ENCODE measurements at regions of chr15 and their contacts with region 1.

Region 1: DNA sequence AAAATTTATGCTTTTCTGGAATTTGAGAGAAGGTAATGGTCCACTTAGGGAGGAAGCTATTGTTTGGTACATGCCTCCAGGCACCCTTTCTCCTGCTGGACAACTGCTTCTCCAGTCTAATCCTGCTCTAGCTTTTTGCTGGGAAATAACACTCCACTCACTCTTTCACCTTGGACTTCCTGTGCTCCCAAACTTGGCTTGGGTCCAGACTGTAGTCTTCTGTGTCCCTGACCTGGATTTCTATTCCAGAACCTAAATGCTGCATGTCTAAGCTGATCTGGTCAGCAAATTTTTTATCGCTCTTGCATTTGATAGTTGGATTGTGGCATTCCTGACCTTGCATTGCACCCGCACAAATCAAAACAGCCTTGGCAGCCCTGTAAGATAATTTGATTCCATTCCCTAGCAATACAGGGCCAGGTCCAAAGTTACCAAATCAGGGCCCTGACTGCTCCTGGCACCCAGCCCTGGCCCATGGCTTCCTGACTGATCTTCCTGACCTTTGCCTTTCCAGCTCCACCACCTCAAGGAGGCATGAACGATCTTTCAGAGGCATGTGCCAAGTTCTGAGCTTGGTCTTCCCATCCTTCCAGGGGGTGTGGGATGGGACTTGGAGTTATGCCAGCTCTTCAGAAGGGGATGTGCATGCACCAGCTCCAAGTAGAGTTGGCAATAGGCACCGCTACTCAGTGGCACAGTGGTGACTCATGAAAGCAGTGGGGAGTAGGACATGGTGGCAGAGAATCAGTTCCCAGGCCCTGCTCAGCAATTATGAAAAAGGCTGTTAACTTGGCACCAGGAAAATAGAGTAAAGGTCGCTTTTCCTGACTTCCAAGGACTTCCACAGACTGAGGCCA is 43.9 kb upstream of the GOLGA8J start:
- DNase-seq: no peak
- ATAC-seq: no peak
- H3K4me3 ChIP-seq: no peak overlapping the region
- H3K27ac ChIP-seq: no peak overlapping the region
- H3K4me1 ChIP-seq: no peaks in the 10 kb centered on the region
- H3K27me3 ChIP-seq: no peaks in the 10 kb centered on the region; a peak in 2 of 5 replicates
- CTCF ChIP-seq: no peak
- EP300 ChIP-seq: no peak
- POLR2A ChIP-seq: no peak
- RAD21 ChIP-seq: no peak

Region 2: GRCh38 chr15:29888646-29889045 is 150.2 kb before region 1 on chr15:
- CTCF ChIA-PET with region 1: no interaction called
- POLR2A ChIA-PET with region 1: no interaction called
- in situ Hi-C with region 1: no loop called
- intact Hi-C with region 1: no loop called
- DNase-seq: no peak
- ATAC-seq: peak; percentile 39; the same call in 1 of the 3 replicates
- H3K4me3 ChIP-seq: no peak overlapping the region
- H3K27ac ChIP-seq: no peak overlapping the region
- H3K4me1 ChIP-seq: peaks cover 7% of the 10 kb centered on the region
- H3K27me3 ChIP-seq: peaks cover 0 to 4% of the 10 kb centered on the region in 2 experiments; a peak in 1 of 5 replicates
- CTCF ChIP-seq: no peak
- EP300 ChIP-seq: no peak
- POLR2A ChIP-seq: no peak
- RAD21 ChIP-seq: no peak

Region 3: DNA sequence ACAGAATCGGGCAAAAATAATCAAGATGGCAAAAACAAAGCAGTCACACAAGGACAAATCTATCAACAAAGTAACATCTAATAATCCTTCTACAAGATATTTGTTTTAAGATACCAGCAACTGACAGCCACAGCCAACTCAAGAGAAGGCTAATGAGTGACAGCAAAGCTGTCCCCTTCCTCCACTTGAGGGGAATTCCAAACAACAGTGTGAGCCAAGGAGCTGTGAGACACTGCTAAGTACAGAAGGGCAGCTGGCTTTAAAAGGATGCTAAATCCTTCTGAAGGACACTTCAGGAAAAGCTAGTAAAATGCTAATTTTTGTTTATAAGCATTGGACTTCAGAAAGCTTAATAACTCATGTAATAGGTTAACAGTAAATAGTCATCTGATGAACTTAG is 76.5 kb before region 1 on chr15:
- CTCF ChIA-PET with region 1: no interaction called
- POLR2A ChIA-PET with region 1: no interaction called
- in situ Hi-C with region 1: no loop called
- intact Hi-C with region 1: no loop called
- DNase-seq: no peak
- ATAC-seq: no peak
- H3K4me3 ChIP-seq: no peak overlapping the region
- H3K27ac ChIP-seq: no peak overlapping the region
- H3K4me1 ChIP-seq: no peaks in the 10 kb centered on the region
- H3K27me3 ChIP-seq: peaks cover 0 to 3% of the 10 kb centered on the region in 2 experiments; a peak in 1 of 5 replicates
- CTCF ChIP-seq: no peak
- EP300 ChIP-seq: no peak
- POLR2A ChIP-seq: no peak
- RAD21 ChIP-seq: no peak

Region 4: GRCh38 chr15:29978411-29979382 is 60.2 kb before region 1 on chr15:
- CTCF ChIA-PET with region 1: no interaction called
- POLR2A ChIA-PET with region 1: no interaction called
- in situ Hi-C with region 1: loop called (anchors 10 kb)
- intact Hi-C with region 1: no loop called
- DNase-seq: no peak
- ATAC-seq: no peak
- H3K4me3 ChIP-seq: no peak overlapping the region
- H3K27ac ChIP-seq: no peak overlapping the region
- H3K4me1 ChIP-seq: no peaks in the 10 kb centered on the region
- H3K27me3 ChIP-seq: no peaks in the 10 kb centered on the region
- CTCF ChIP-seq: no peak
- EP300 ChIP-seq: no peak
- POLR2A ChIP-seq: no peak
- RAD21 ChIP-seq: no peak

Measured in HepG2 (cell line).